ENCODE measurements at regions of chr18 and their contacts with region 1.

Region 1: DNA sequence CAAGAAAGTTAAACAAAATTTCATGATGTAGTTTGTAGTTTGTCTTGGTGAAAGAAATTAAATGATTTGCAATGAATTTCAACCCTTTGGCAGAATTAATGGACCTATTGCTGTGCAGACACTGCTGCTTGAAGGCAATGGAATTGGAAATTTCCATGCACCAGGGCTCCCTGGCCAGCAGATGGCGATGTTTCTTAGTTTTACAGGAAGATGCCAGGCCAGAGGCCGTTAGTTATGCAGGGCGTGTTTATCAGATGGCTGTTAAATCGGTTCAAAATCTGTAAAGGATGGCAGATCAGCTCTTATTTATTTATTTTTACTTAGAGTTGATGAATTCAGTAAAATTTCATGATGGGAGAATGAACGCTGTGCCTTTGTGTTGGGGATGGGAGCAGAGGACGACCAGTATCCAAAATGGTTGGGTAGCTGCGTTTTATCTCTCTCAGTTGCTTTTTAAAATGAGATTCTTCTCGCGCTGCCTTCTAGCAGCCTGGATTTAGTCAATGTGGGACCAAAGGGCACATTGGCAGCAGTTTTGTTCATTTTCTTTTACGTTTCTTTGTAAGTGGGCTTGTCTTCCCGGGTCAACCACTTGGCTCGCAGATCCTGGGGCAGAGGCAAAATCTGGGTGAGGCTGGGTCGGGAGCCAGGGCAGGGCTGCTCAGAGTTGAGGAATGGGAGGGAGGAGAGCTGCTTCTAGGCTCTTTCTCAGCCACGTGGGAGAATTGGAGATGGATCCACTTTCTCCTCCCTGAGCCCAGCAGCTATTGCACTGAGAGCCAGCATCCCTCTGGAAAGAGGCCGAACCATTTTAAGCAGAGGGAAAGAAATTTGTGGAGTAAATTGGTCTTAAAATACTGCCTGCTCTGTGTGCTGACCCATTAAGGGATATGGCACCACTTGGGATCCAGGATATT is 344.0 kb downstream of the PIK3C3 start:
- DNase-seq: peak; percentile 61
- H3K4me3 ChIP-seq: no peak overlapping the region
- H3K27ac ChIP-seq: no peak overlapping the region
- H3K4me1 ChIP-seq: no peaks in the 10 kb centered on the region
- H3K27me3 ChIP-seq: no peaks in the 10 kb centered on the region
- CTCF ChIP-seq: peak; percentile 72 to 78
- POLR2A ChIP-seq: no peak

Region 2: GRCh38 chr18:43271593-43272432 is 972.8 kb after region 1 on chr18:
- CTCF ChIA-PET with region 1: interaction called, 73 read pairs
- POLR2A ChIA-PET with region 1: no interaction called
- dilution Hi-C with region 1: no loop called
- intact Hi-C with region 1: loop called (anchors 1 kb)
- DNase-seq: peak; percentile 63
- H3K4me3 ChIP-seq: no peak overlapping the region
- H3K27ac ChIP-seq: no peak overlapping the region
- H3K4me1 ChIP-seq: no peaks in the 10 kb centered on the region
- H3K27me3 ChIP-seq: no peaks in the 10 kb centered on the region
- CTCF ChIP-seq: peak; percentile 32 to 42
- POLR2A ChIP-seq: no peak

Region 3: GRCh38 chr18:43587538-43588153 is 1288.6 kb after region 1 on chr18:
- CTCF ChIA-PET with region 1: interaction called, 15 read pairs
- POLR2A ChIA-PET with region 1: no interaction called
- dilution Hi-C with region 1: no loop called
- intact Hi-C with region 1: loop called (anchors 2 kb)
- DNase-seq: peak; percentile 43
- H3K4me3 ChIP-seq: no peak overlapping the region
- H3K27ac ChIP-seq: no peak overlapping the region
- H3K4me1 ChIP-seq: no peaks in the 10 kb centered on the region
- H3K27me3 ChIP-seq: no peaks in the 10 kb centered on the region
- CTCF ChIP-seq: peak; percentile 44 to 56
- POLR2A ChIP-seq: no peak

Measured in endothelial cell of umbilical vein (primary cell).